K562 (cell line): ENCODE measurements at regions of chr20 and their contacts with region 1.

Region 1: GRCh38 chr20:5056801-5057599 is 55.7 kb upstream of the SLC23A2 start:
- DNase-seq: peak; percentile 47 to 74 (median 60)
- ATAC-seq: peak; percentile 98
- H3K4me3 ChIP-seq: no peak overlapping the region
- H3K27ac ChIP-seq: peak overlapping the region; percentile 64; the same call in 2 of the 3 replicates
- H3K4me1 ChIP-seq: peaks cover 5 to 6% of the 10 kb centered on the region in 2 experiments; a peak in 3 of 5 replicates
- H3K27me3 ChIP-seq: no peaks in the 10 kb centered on the region
- CTCF ChIP-seq: peak; percentile 57 to 67 (median 66)
- EP300 ChIP-seq: no peak
- POLR2A ChIP-seq: no peak
- RAD21 ChIP-seq: peak; percentile 30 to 47

Region 2: DNA sequence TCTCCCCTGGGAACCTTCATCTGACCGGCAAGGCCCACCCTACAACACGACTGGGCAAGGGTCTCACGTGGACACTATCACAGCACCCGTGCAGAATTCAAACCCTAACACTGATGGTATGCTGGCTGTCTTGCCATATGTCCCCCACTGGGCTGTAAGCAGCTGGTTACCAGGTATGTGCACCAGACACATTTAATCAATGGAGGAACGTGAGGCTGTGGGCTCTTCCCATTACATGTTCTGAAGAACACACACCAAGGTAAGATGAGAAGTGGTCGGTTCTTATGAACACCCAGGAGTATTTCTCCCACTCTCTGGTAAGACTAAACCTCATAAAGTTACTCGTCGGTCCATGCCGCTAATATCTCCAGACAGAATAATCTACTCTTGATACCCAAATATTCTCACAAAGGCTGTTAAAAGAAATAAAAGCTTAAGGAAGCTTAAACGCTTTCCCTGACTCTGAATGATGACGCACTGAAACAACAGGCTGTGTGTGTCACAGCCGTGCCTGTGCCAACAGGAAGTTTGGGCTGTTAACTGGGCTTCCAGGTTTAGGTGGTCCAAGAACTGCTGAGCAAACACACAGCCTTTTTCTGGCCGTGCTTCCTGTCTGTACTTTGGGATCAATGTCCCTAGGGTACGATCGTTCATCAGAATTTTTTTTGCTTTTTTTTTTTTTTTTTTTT is 131.0 kb before region 1 on chr20:
- CTCF ChIA-PET with region 1: no interaction called
- POLR2A ChIA-PET with region 1: no interaction called
- in situ Hi-C with region 1: no loop called
- intact Hi-C with region 1: no loop called
- DNase-seq: no peak
- ATAC-seq: no peak
- H3K4me3 ChIP-seq: no peak overlapping the region
- H3K27ac ChIP-seq: no peak overlapping the region
- H3K4me1 ChIP-seq: no peaks in the 10 kb centered on the region
- H3K27me3 ChIP-seq: no peaks in the 10 kb centered on the region
- CTCF ChIP-seq: no peak
- EP300 ChIP-seq: no peak
- POLR2A ChIP-seq: no peak
- RAD21 ChIP-seq: no peak

Region 3: DNA sequence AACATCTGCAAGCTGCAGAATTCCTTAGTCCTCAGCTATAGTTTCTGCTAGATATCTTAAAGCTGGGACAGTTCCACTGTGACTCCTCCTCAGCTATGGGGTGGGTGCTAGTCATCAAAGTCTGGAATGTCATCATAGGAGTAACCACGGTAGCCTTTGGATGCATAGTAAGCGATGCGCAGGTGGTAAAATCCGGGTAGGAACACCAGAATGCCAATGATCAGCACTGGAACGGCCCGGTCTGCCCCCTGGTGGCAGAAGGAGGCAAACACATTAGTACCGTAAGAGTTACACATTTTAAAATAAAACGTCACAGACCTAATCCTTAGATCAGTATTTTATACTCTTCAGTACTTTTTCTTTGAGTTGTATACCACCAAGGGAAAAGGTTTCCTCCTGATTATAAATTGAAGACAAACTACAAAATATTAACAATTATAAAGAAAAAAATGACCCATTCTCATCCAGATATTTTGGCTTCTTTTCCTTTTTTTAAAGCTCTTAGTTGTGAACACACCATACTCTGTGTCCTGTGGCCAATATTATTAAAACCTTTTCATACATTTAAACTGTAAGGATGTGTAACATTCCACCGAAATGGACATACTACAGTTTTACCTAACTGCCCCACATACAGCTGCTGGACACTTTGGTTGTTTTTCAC is 43.8 kb after region 1 on chr20:
- CTCF ChIA-PET with region 1: no interaction called
- POLR2A ChIA-PET with region 1: no interaction called
- in situ Hi-C with region 1: no loop called
- intact Hi-C with region 1: loop called (anchors 2 kb)
- DNase-seq: peak; percentile 45 to 63 (median 55)
- ATAC-seq: peak; percentile 88
- H3K4me3 ChIP-seq: no peak overlapping the region
- H3K27ac ChIP-seq: no peak overlapping the region
- H3K4me1 ChIP-seq: no peaks in the 10 kb centered on the region
- H3K27me3 ChIP-seq: no peaks in the 10 kb centered on the region
- CTCF ChIP-seq: peak; percentile 65 to 72 (median 66)
- EP300 ChIP-seq: no peak
- POLR2A ChIP-seq: no peak
- RAD21 ChIP-seq: peak; percentile 70

Region 4: DNA sequence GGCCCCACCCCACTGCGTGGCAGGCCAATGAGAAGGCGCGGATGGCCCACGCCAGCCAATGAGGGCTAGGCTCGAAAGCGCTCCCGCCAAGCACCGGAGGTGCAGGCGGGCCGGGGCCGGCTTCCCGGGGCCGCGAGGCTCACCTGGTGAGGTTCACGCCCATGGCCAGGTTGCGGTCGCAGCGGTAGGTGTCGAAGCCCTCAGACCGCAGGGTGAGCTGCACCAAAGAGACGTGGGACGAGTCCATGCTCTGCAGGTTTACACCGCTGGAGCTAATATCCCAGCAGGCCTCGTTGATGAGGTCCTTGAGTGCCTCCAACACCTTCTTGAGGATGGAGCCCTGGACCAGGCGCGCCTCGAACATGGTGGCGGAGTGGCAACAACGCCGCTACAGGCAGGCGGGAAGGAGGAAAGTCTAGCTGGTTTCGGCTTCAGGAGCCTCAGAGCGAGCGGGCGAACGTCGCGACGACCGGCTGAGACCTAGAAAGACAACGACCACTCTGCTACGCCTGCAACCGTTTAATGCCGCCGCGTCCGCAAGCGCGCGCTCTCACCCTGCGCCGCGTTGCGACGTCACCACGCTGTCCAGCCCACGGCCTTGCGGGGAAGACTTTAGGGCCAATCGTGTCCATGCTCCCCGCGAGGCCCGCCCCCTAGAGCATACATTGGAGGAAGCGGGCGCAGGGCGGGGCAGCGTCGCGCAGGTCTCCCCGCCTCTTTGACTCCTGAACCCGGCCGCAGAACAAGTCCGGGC is 62.6 kb after region 1 on chr20 and contains the start of gene PCNA:
- CTCF ChIA-PET with region 1: no interaction called
- POLR2A ChIA-PET with region 1: no interaction called
- in situ Hi-C with region 1: no loop called
- intact Hi-C with region 1: no loop called
- DNase-seq: peak; percentile 84 to 96 (median 92)
- ATAC-seq: peak; percentile 92
- H3K4me3 ChIP-seq: peak within 1 kb of the TSS; percentile 77
- H3K27ac ChIP-seq: peak within 1 kb of the TSS; percentile 94
- H3K4me1 ChIP-seq: peaks cover 13 to 16% of the 10 kb centered on the region in 2 experiments; a peak in 3 of 5 replicates
- H3K27me3 ChIP-seq: no peaks in the 10 kb centered on the region
- CTCF ChIP-seq: no peak
- EP300 ChIP-seq: no peak
- POLR2A ChIP-seq: peak; percentile 98
- RAD21 ChIP-seq: no peak
- polyA plus RNA-seq, gene PCNA: 352 to 390 TPM